Esophagus squamous epithelium (tissue), 5 donors: ENCODE measurements at regions of chr2 and their contacts with region 1.

Region 1: DNA sequence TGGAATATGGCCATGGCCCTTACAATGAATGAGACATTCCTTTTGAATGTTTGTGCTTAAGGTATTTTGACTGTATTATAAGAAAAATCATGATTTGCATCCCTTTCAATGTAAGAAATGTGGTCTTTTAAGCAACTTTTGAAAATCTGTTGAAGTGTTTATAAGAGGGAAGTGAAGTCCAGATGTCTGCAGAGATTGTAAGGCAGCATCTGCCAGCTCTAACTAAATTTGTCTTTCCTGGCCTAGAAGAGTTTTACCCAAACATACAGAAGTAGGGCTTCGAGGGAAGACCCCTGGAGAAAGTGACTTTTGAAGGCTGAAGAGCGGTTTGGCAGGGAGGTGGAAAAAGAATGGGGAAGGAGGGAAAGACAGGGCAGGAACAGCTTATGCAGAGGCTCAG is 12.2 kb downstream of the EML6 start:
- DNase-seq: no peak
- H3K4me3 ChIP-seq: no peak overlapping the region
- H3K27ac ChIP-seq: no peak overlapping the region
- H3K4me1 ChIP-seq: no peaks in the 10 kb centered on the region
- H3K27me3 ChIP-seq: no peaks in the 10 kb centered on the region
- CTCF ChIP-seq: no peak
- POLR2A ChIP-seq: no peak

Region 2: GRCh38 chr2:54545702-54546450 is 189.8 kb before region 1 on chr2:
- intact Hi-C with region 1: no loop called
- DNase-seq: no peak
- H3K4me3 ChIP-seq: no peak overlapping the region
- H3K27ac ChIP-seq: peak overlapping the region in 2 of 4 donors; percentile 15 to 29
- H3K4me1 ChIP-seq: peaks cover 1 to 27% (median 12%) of the 10 kb centered on the region in 3 donors
- H3K27me3 ChIP-seq: no peaks in the 10 kb centered on the region
- CTCF ChIP-seq: no peak
- POLR2A ChIP-seq: no peak

Region 3: GRCh38 chr2:54845514-54845913 is 109.9 kb after region 1 on chr2:
- intact Hi-C with region 1: loop called (anchors 10 kb)
- DNase-seq: no peak
- H3K4me3 ChIP-seq: no peak overlapping the region
- H3K27ac ChIP-seq: no peak overlapping the region
- H3K4me1 ChIP-seq: peaks cover 0 to 4% (median 0%) of the 10 kb centered on the region in 3 donors
- H3K27me3 ChIP-seq: no peaks in the 10 kb centered on the region
- CTCF ChIP-seq: no peak
- POLR2A ChIP-seq: no peak